MCF 10A (cell line): ENCODE measurements at regions of chr17 and their contacts with region 1.

Region 1: DNA sequence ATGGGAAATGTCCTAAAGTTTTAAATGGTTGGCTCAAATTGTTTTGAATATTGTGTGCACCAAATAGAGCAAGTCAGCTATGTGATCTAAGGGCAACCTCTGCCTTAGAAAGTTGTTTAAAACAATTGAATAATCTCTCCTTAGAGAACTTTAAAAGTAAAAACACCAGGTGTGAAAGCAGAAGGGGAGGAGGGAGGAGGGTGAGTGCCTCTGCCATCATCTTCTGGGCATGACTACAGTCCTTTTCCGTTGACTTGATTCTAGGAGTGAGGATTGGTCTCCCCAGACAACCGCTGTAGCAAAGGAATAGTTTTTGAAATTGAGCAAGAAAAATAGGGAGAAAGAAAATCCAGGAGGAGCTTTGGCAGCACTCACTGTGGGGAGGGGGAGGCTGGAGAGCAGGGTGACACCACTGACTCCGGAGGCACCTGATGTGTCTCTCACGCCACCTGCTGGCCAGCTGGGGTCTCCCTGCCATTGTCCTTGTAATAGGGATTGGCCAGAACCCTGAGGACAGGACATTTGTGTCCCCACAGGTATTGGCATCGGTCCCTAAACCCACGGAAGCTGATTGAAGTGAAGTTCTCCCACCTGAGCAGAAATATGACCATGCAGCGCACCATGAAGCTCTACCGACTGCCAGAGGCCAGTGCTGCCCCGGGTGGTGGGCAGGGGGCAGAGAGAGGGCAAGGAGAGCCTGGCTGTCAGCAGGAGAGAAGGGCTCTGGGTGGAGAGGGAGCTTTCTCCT is 33.3 kb downstream of the PLCD3 start:
- DNase-seq: peak; percentile 85
- H3K4me3 Mint-ChIP-seq: no peak overlapping the region
- H3K27ac Mint-ChIP-seq: peak overlapping the region; percentile 86
- H3K4me1 Mint-ChIP-seq: peaks cover 33% of the 10 kb centered on the region
- H3K27me3 Mint-ChIP-seq: no peaks in the 10 kb centered on the region
- CTCF ChIP-seq: peak; percentile 93

Region 2: GRCh38 chr17:44919885-44920564 is 179.0 kb before region 1 on chr17:
- CTCF ChIA-PET with region 1: interaction called, 49 read pairs
- POLR2A ChIA-PET with region 1: interaction called, 7 read pairs
- intact Hi-C with region 1: loop called (anchors 1 kb)
- DNase-seq: peak; percentile 85
- H3K4me3 Mint-ChIP-seq: no peak overlapping the region
- H3K27ac Mint-ChIP-seq: no peak overlapping the region
- H3K4me1 Mint-ChIP-seq: peaks cover 19% of the 10 kb centered on the region
- H3K27me3 Mint-ChIP-seq: no peaks in the 10 kb centered on the region
- CTCF ChIP-seq: peak; percentile 81

Region 3: DNA sequence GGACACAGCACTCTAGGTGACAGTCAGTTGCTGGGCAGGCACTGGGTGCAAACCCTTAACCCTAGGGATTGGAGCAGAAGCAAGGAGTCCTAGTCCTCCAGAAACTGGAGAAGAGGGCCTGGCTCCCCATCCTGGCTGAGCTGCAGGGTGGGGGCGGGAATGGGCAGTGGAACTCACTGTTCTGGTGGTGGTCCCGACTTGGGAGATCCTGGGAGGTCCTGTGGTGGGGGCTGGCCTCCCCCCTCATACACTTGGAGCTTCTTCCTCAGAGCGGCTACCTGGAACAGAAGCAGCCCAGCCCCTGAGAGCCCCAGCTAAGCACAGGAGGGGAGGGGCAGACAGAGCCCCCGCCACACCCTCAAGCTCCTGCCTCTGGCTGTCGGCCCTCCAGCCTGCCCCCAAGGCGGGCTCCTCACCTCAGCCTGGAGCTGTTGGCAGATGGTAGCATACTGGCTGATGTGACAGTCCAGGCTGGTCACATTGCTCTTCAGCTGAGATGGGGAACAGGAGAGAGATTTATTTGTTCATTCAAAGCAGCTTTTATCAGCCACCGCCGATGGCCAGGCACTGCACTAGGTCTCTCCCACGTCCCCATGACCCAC is 166.4 kb before region 1 on chr17:
- CTCF ChIA-PET with region 1: no interaction called
- POLR2A ChIA-PET with region 1: no interaction called
- intact Hi-C with region 1: no loop called
- DNase-seq: no peak
- H3K4me3 Mint-ChIP-seq: no peak overlapping the region
- H3K27ac Mint-ChIP-seq: no peak overlapping the region
- H3K4me1 Mint-ChIP-seq: no peaks in the 10 kb centered on the region
- H3K27me3 Mint-ChIP-seq: no peaks in the 10 kb centered on the region
- CTCF ChIP-seq: no peak

Region 4: GRCh38 chr17:44965481-44966234 is 133.4 kb before region 1 on chr17:
- CTCF ChIA-PET with region 1: no interaction called
- POLR2A ChIA-PET with region 1: no interaction called
- intact Hi-C with region 1: no loop called
- DNase-seq: no peak
- H3K4me3 Mint-ChIP-seq: no peak overlapping the region
- H3K27ac Mint-ChIP-seq: no peak overlapping the region
- H3K4me1 Mint-ChIP-seq: peaks cover 15% of the 10 kb centered on the region
- H3K27me3 Mint-ChIP-seq: no peaks in the 10 kb centered on the region
- CTCF ChIP-seq: no peak

Region 5: GRCh38 chr17:45051060-45051719 is 47.9 kb before region 1 on chr17 and contains the start of gene DCAKD:
- CTCF ChIA-PET with region 1: interaction called, 12 read pairs
- POLR2A ChIA-PET with region 1: interaction called, 30 read pairs
- intact Hi-C with region 1: loop called (anchors 2 kb)
- DNase-seq: peak; percentile 95
- H3K4me3 Mint-ChIP-seq: peak within 1 kb of the TSS; percentile 75
- H3K27ac Mint-ChIP-seq: peak within 1 kb of the TSS; percentile 77
- H3K4me1 Mint-ChIP-seq: peaks cover 16% of the 10 kb centered on the region
- H3K27me3 Mint-ChIP-seq: no peaks in the 10 kb centered on the region
- CTCF ChIP-seq: no peak
- total RNA-seq, gene DCAKD: 23.1 and 23.3 TPM in 2 replicates

Region 6: GRCh38 chr17:45073414-45074070 is 25.5 kb before region 1 on chr17:
- CTCF ChIA-PET with region 1: interaction called, 14 read pairs
- POLR2A ChIA-PET with region 1: no interaction called
- intact Hi-C with region 1: no loop called
- DNase-seq: no peak
- H3K4me3 Mint-ChIP-seq: no peak overlapping the region
- H3K27ac Mint-ChIP-seq: peak overlapping the region; percentile 25
- H3K4me1 Mint-ChIP-seq: peaks cover 16% of the 10 kb centered on the region
- H3K27me3 Mint-ChIP-seq: no peaks in the 10 kb centered on the region
- CTCF ChIP-seq: no peak

Region 7: GRCh38 chr17:45115871-45116724 is 17.1 kb after region 1 on chr17:
- CTCF ChIA-PET with region 1: interaction called, 9 read pairs
- POLR2A ChIA-PET with region 1: interaction called, 13 read pairs
- intact Hi-C with region 1: no loop called
- DNase-seq: no peak
- H3K4me3 Mint-ChIP-seq: no peak overlapping the region
- H3K27ac Mint-ChIP-seq: no peak overlapping the region
- H3K4me1 Mint-ChIP-seq: no peaks in the 10 kb centered on the region
- H3K27me3 Mint-ChIP-seq: no peaks in the 10 kb centered on the region
- CTCF ChIP-seq: no peak

Region 8: DNA sequence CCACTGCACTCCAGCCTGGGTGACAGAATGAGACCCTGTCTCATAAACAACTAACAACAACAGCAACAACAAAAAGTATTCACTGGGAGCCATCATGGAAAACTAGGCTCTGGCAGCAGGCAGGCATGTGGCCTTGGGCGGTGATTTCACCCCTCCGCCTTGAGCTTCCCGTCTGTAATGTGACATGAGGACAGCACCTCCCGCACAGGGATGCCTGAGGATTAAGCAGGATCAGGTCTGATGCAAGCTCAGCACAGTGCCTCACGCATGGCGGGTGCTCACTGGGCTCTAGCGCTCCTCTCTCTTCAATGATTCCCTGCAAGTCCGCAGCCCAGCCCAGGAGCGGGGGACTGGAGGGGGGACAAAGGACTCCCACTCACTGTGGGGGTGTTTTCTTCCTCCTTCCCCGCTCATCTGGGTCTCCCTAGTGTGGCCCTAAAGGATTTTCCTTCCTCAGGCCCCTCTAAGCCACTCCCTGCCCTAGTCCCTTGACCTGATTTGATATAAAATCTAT is 30.4 kb after region 1 on chr17:
- CTCF ChIA-PET with region 1: interaction called, 17 read pairs
- POLR2A ChIA-PET with region 1: interaction called, 12 read pairs
- intact Hi-C with region 1: loop called (anchors 1 kb)
- DNase-seq: no peak
- H3K4me3 Mint-ChIP-seq: peak overlapping the region; percentile 23
- H3K27ac Mint-ChIP-seq: peak overlapping the region; percentile 80
- H3K4me1 Mint-ChIP-seq: peaks cover 37% of the 10 kb centered on the region
- H3K27me3 Mint-ChIP-seq: no peaks in the 10 kb centered on the region
- CTCF ChIP-seq: no peak